ENCODE measurements at regions of chr3 and their contacts with region 1.

Region 1: GRCh38 chr3:188320757-188321156 is 166.8 kb downstream of the LPP start:
- DNase-seq: no peak
- H3K4me3 Mint-ChIP-seq: no peak overlapping the region
- H3K27ac Mint-ChIP-seq: no peak overlapping the region
- H3K4me1 Mint-ChIP-seq: peaks cover 49% of the 10 kb centered on the region
- H3K27me3 Mint-ChIP-seq: peaks cover 1% of the 10 kb centered on the region

Region 2: GRCh38 chr3:187929112-187929816 is 391.5 kb before region 1 on chr3:
- intact Hi-C with region 1: loop called (anchors 1 kb)
- DNase-seq: no peak
- H3K4me3 Mint-ChIP-seq: peak overlapping the region; percentile 11
- H3K27ac Mint-ChIP-seq: peak overlapping the region; percentile 88
- H3K4me1 Mint-ChIP-seq: peaks cover 45% of the 10 kb centered on the region
- H3K27me3 Mint-ChIP-seq: no peaks in the 10 kb centered on the region

Region 3: DNA sequence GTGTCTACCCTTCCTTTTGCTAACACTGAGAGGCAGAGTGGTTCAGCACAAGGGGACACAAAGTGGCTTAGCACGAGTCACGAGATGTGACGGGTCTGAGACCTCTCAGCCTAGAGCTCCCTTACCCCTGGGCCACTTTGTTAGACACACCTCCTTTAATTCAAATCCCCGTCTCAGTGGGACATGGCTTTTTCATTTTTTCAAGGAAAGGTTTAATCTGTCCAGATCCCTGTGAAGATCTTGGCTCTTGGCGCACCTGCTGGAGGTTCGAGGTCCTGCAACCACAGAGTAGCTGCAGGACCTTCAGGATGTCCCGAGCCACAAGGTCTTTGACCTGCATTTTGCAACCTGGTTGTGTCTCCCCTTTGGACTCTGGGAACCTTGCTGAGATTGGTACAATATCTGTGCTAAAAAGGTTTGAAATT is 114.8 kb before region 1 on chr3:
- intact Hi-C with region 1: no loop called
- DNase-seq: no peak
- H3K4me3 Mint-ChIP-seq: no peak overlapping the region
- H3K27ac Mint-ChIP-seq: no peak overlapping the region
- H3K4me1 Mint-ChIP-seq: peaks cover 28% of the 10 kb centered on the region
- H3K27me3 Mint-ChIP-seq: no peaks in the 10 kb centered on the region

Region 4: DNA sequence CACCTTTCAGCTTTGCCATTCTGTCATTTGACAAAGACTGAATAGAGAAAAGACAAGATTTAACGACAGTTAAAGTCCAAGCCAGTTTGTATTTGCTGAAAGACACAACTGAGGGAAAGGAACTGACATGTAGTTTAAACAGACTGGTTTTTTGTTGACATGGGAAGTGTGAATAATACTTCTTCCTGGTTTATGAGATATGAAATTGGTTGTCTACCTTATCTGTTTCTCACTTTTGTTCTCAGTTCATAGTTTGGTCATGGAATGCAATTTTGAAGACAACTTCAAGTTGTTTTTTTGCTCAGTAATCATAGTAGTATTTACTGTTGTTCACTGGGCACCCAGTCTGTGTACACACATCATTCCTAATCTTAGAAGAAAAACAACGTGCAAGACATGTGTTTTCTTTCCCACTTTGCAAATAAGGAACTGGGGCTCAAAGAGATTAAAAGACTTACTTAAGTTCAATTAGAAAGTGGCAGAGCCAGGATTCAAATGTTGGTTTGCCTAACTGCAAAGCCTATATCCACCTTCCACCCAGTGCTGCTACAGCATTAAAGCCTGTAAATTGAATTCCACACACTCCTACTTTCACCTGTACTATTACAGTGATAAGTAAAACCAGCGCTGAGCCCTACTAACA is 63.3 kb before region 1 on chr3:
- intact Hi-C with region 1: loop called (anchors 1 kb)
- DNase-seq: no peak
- H3K4me3 Mint-ChIP-seq: no peak overlapping the region
- H3K27ac Mint-ChIP-seq: peak overlapping the region; percentile 63
- H3K4me1 Mint-ChIP-seq: peaks cover 62% of the 10 kb centered on the region
- H3K27me3 Mint-ChIP-seq: peaks cover 2% of the 10 kb centered on the region

Region 5: GRCh38 chr3:188309437-188310269 is 11.1 kb before region 1 on chr3:
- intact Hi-C with region 1: loop called (anchors 1 kb)
- DNase-seq: no peak
- H3K4me3 Mint-ChIP-seq: peak overlapping the region; percentile 40
- H3K27ac Mint-ChIP-seq: peak overlapping the region; percentile 64
- H3K4me1 Mint-ChIP-seq: peaks cover 35% of the 10 kb centered on the region
- H3K27me3 Mint-ChIP-seq: peaks cover 9% of the 10 kb centered on the region

Region 6: DNA sequence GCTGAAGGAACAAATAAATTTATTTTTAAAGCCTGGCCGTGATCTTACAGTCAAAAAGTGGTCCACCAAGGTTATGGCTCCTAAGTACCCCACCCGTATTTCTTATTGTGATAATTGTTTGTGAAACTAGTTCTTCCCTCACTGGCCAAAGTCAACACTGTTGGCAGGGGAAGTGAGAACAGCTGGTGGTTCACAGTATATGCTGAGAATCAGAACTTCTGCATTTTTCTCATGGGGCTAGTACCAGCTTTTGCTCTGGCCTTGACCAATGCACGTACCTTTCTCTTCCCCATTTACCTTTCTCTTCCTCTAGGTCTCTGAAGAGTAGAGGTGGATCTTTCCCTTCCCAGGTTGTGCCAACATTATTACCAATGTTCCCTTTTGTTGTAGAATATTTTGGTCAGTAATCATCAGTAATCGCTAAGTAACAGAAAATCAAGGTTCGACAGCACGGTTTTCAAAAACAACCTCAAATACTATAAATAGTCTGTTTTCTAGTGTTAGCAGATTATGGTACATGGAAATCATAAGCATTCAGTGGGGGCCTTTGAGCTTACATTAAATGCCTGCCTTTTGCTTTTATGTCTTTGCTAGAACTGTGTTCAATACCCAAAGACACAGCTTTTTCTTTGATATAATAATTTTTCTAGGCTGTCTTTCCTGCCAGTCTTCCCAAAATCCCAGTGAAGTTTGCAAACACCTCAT is 101.2 kb after region 1 on chr3:
- intact Hi-C with region 1: no loop called
- DNase-seq: no peak
- H3K4me3 Mint-ChIP-seq: no peak overlapping the region
- H3K27ac Mint-ChIP-seq: no peak overlapping the region
- H3K4me1 Mint-ChIP-seq: peaks cover 29% of the 10 kb centered on the region
- H3K27me3 Mint-ChIP-seq: no peaks in the 10 kb centered on the region

Region 7: DNA sequence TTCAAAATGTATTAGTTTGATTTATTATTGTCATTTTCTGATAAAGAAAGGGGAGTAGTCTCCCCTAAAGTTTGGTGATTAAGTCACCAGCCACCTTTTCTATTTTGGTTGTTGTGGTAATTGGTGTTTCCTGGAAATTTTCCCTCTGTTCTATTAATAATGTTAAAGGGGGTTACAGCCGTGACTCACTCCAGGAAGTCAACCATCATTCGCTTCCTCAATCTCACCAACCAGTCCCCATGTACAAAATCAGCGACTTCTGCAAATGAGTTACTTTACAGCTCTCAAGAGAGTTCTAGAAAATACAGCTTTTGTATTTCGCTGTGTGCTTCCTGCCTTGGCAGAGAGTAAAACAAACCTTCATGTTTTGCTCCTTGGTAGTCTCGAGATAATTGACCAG is 118.3 kb after region 1 on chr3:
- intact Hi-C with region 1: loop called (anchors 5 kb)
- DNase-seq: peak; percentile 31
- H3K4me3 Mint-ChIP-seq: peak overlapping the region; percentile 6
- H3K27ac Mint-ChIP-seq: peak overlapping the region; percentile 37
- H3K4me1 Mint-ChIP-seq: peaks cover 54% of the 10 kb centered on the region
- H3K27me3 Mint-ChIP-seq: no peaks in the 10 kb centered on the region

Measured in activated T-helper 1 cell treated with anti-CD3 and anti-CD28 coated beads, Interleukin-12 subunit alpha, Interleukin-12 subunit beta, Interleukin-2, Interleukin-4 antibody, amounts not matched to agents 30 ng/mL and 10 ng/mL and 1 ng/mL, durations not matched to agents 14 hours and 24 hours and 36 hours (primary cell).